Activated CD4-positive, alpha-beta T cell treated with anti-CD3 and anti-CD28 coated beads for 36 hours (primary cell): ENCODE measurements at regions of chr4 and their contacts with region 1.

Region 1: GRCh38 chr4:142293536-142293935 is 552.6 kb downstream of the INPP4B start:
- DNase-seq: no peak
- ATAC-seq: no peak
- H3K4me3 Mint-ChIP-seq: no peak overlapping the region
- H3K27ac Mint-ChIP-seq: peak overlapping the region; percentile 3
- H3K4me1 Mint-ChIP-seq: peaks cover 67% of the 10 kb centered on the region
- H3K27me3 Mint-ChIP-seq: no peaks in the 10 kb centered on the region

Region 2: DNA sequence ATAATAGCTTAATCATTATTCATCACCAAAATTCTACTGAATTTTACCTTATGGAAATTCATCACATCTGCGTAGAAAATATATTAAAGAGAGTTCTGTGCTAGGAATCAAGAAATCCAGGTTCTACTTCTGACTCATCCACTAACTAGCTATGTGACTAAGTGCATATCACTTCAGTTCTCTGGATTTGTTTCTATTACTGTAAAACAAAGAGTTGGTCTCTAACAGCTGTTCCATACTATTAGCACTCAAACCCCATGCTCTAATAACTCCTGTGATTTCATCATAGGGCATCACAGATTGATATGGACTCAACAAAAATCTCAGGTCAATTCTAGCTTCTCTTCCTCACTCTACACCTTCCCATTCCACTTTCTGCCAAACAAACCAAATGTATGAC is 19.4 kb before region 1 on chr4:
- CTCF ChIA-PET with region 1: interaction called, 7 read pairs
- POLR2A ChIA-PET with region 1: no interaction called
- intact Hi-C with region 1: loop called in 1 of 2 experiments (anchors 1 kb)
- DNase-seq: no peak
- ATAC-seq: peak; percentile 66
- H3K4me3 Mint-ChIP-seq: no peak overlapping the region
- H3K27ac Mint-ChIP-seq: peak overlapping the region; percentile 84
- H3K4me1 Mint-ChIP-seq: peaks cover 84% of the 10 kb centered on the region
- H3K27me3 Mint-ChIP-seq: no peaks in the 10 kb centered on the region

Region 3: GRCh38 chr4:142282870-142283431 is 10.6 kb before region 1 on chr4:
- CTCF ChIA-PET with region 1: interaction called, 19 read pairs
- POLR2A ChIA-PET with region 1: interaction called, 3 read pairs
- intact Hi-C with region 1: no loop called
- DNase-seq: no peak
- ATAC-seq: no peak
- H3K4me3 Mint-ChIP-seq: no peak overlapping the region
- H3K27ac Mint-ChIP-seq: no peak overlapping the region
- H3K4me1 Mint-ChIP-seq: peaks cover 23% of the 10 kb centered on the region
- H3K27me3 Mint-ChIP-seq: no peaks in the 10 kb centered on the region

Region 4: DNA sequence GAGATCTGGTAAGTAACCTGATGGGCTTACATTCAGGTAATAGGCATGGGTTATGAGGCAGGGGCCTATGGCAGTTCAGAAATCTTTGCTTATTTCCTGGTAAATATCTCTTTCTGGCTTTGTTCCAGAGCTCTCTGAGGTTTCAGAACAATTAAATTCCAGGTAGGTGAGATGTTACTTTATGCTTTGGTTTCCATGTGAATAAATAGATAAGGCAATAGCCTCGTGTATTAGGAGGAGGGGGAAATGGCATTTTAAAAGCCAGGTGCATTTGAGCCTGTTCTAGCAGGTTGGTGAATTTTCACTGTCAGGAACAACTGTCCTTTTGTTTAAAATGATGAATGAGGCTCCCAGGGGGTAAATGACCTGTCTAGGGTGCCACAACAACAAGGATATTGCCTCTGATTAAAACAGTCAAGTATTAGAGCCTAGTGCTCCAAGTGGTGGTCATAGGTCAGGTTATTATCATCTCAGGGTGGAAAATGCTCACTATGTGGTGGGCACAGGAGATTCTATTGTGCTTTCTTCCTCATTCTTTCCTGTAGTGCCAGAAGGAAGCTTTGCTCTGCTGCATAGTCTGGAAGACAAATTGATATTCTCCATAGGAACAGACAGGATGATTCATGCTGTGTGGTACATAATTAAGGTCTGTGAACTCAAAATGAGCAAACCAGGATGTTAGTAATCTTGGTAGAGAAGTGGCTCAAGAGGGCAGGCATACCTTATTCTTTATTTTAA is 256.4 kb after region 1 on chr4:
- CTCF ChIA-PET with region 1: no interaction called
- POLR2A ChIA-PET with region 1: no interaction called
- intact Hi-C with region 1: loop called in 1 of 2 experiments (anchors 5 kb)
- DNase-seq: no peak
- ATAC-seq: peak; percentile 83
- H3K4me3 Mint-ChIP-seq: no peak overlapping the region
- H3K27ac Mint-ChIP-seq: peak overlapping the region; percentile 86
- H3K4me1 Mint-ChIP-seq: peaks cover 66% of the 10 kb centered on the region
- H3K27me3 Mint-ChIP-seq: no peaks in the 10 kb centered on the region

Region 5: DNA sequence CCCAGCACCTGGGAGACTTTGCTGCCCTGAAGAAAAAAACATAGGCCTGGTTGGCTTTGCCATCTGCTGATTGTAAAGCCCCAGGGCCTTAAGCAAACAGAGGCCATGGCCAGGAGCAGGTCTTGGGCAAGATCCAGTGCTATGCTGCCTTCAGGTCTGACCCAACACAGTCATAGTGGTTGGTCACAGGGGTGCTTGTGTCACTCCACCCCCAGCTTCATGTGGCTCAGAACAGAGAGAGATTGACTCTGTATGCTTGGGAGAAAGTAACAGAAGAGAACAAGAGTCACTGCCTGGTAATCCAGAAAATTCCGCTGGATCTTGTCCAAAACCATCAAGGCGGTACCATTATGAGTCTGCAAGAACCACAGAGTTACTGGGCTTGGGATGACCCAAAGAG is 1195.6 kb after region 1 on chr4:
- CTCF ChIA-PET with region 1: no interaction called
- POLR2A ChIA-PET with region 1: no interaction called
- intact Hi-C with region 1: no loop called
- DNase-seq: no peak
- ATAC-seq: no peak
- H3K4me3 Mint-ChIP-seq: no peak overlapping the region
- H3K27ac Mint-ChIP-seq: no peak overlapping the region
- H3K4me1 Mint-ChIP-seq: no peaks in the 10 kb centered on the region
- H3K27me3 Mint-ChIP-seq: peaks cover 9% of the 10 kb centered on the region